ENCODE measurements at regions of chr7 and their contacts with region 1.

Region 1: GRCh38 chr7:148819697-148820360 is 64.3 kb downstream of the EZH2 start:
- DNase-seq: no peak

Region 2: DNA sequence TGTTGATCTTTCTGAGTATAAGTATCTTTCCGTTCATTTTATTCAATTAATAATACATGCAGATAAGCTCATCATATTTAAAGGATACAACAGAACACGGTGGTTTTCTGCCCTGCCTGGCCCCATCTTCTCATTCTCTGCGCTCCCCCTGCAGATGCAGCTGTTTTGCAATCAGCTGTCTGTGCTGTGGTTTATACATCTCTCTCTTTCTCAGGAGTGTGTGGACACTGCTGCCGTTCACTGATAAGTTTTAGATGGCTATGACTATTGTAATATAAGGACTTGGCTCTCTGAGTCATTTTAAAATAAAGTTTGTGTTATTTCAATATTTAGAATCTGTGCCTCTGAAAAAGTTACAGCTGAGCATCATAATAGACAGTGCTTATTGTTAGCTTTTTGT is 66.6 kb before region 1 on chr7:
- intact Hi-C with region 1: loop called (anchors 10 kb)
- DNase-seq: no peak

Measured in cardiac septum (tissue), 1 donor.